ENCODE measurements at regions of chr10 and their contacts with region 1.

Region 1: GRCh38 chr10:17599089-17599488 is 18.1 kb downstream of the HACD1 start:
- DNase-seq: peak; percentile 55
- ATAC-seq: peak; percentile 27; the same call in 1 of the 2 replicates
- H3K4me3 ChIP-seq: no peak overlapping the region
- H3K27ac ChIP-seq: no peak overlapping the region
- H3K4me1 ChIP-seq: no peaks in the 10 kb centered on the region
- H3K27me3 ChIP-seq: no peaks in the 10 kb centered on the region
- CTCF ChIP-seq: peak; percentile 46
- POLR2A ChIP-seq: no peak
- RAD21 ChIP-seq: peak; percentile 58

Region 2: GRCh38 chr10:17430647-17431355 is 168.3 kb before region 1 on chr10:
- CTCF ChIA-PET with region 1: no interaction called
- POLR2A ChIA-PET with region 1: no interaction called
- dilution Hi-C with region 1: no loop called
- in situ Hi-C with region 1: no loop called
- intact Hi-C with region 1: loop called (anchors 5 kb)
- DNase-seq: peak; percentile 73
- ATAC-seq: peak; percentile 97
- H3K4me3 ChIP-seq: no peak overlapping the region
- H3K27ac ChIP-seq: no peak overlapping the region
- H3K4me1 ChIP-seq: peaks cover 2% of the 10 kb centered on the region; the same call in 1 of the 2 replicates
- H3K27me3 ChIP-seq: peaks cover 26% of the 10 kb centered on the region
- CTCF ChIP-seq: peak; percentile 83
- POLR2A ChIP-seq: no peak
- RAD21 ChIP-seq: peak; percentile 80

Region 3: DNA sequence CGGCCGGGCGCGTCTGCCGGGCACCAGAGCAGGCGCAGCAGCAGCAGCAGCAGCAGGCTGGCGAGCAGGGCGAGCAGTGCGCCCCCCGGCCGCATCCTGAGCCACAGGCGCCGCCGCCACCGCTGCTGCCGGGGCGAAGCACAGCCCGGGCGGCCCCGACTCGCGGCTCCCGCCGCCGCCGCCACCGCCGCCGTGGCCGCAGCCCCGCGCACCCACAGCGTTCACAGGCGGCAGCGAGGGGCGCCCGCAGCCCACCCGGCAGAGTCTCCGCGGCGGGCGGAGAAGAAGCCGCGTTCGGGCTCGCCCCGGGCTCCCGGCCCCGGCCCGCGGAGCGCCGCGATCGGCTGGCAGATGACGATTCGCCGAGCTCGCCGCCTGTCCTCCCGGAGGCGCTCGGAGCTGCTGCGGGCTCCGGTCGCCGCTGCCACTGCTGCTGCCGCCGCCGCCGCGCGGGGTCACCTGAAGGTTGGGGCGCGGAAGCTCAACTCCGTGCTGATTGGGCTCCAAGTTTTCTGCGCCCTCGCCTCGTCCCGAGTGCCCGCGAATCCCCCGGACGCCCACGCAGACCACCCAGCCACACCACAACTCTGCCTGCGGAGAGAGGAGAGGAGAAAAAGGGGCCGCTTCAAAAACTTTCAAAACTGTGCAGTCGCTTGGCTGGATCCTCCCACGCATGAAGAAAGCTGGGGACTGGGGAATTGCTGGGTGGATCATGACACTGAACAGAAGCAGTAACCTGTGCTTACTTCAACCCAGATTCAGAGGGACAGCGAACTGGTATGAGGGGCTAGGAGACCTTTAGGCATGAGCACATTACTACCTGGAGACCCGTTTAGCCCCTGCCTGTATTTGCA is 144.7 kb before region 1 on chr10 and contains the start of gene ST8SIA6:
- CTCF ChIA-PET with region 1: interaction called, 3 read pairs
- POLR2A ChIA-PET with region 1: no interaction called
- dilution Hi-C with region 1: no loop called
- in situ Hi-C with region 1: no loop called
- intact Hi-C with region 1: loop called (anchors 5 kb)
- DNase-seq: peak; percentile 47
- ATAC-seq: peak; percentile 93
- H3K4me3 ChIP-seq: peak within 1 kb of the TSS; percentile 52
- H3K27ac ChIP-seq: no peak within 1 kb of the TSS
- H3K4me1 ChIP-seq: peaks cover 2% of the 10 kb centered on the region; the same call in 1 of the 2 replicates
- H3K27me3 ChIP-seq: peaks cover 10% of the 10 kb centered on the region; the same call in 1 of the 2 replicates
- CTCF ChIP-seq: no peak
- POLR2A ChIP-seq: no peak
- RAD21 ChIP-seq: no peak; the same call in 1 of the 2 replicates
- total RNA-seq, gene ST8SIA6: 0.18 and 0.56 TPM in 2 replicates

Region 4: DNA sequence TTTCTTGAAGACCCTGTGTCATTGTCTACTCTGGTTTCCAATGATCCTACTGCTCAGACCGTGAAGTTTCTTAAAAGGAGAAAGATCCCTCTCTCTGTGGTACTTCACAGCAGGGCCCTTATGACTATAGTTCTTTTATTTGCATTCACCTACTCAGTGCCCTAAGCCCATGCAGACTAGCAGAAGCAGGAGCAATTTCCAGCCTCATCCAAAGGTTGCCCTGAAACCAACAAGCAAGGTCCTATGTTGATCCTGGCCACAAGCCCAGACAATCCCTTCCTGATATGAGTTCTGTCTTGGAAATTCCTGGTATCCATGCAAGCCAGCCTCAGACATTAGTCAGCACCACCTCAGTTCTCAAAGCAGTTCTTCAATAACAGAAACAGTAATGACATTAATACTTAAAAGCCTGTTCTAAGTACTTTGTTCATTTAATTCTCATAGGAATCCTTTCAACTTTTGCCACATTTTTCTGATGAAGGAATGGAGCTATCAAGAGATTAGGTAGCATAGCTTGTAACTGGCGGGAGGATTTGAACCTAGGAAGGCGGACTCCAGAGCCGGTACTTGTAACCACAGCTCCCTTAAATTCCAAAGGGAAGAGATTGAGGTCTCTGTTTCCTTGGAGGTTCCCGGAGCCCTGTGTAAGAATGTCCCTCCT is 86.6 kb before region 1 on chr10:
- CTCF ChIA-PET with region 1: no interaction called
- POLR2A ChIA-PET with region 1: no interaction called
- dilution Hi-C with region 1: no loop called
- in situ Hi-C with region 1: no loop called
- intact Hi-C with region 1: loop called (anchors 5 kb)
- DNase-seq: peak; percentile 98
- ATAC-seq: peak; percentile 93
- H3K4me3 ChIP-seq: peak overlapping the region; percentile 17; the same call in 1 of the 2 replicates
- H3K27ac ChIP-seq: peak overlapping the region; percentile 90
- H3K4me1 ChIP-seq: peaks cover 13% of the 10 kb centered on the region
- H3K27me3 ChIP-seq: no peaks in the 10 kb centered on the region
- CTCF ChIP-seq: no peak
- POLR2A ChIP-seq: no peak
- RAD21 ChIP-seq: 0 out of 2 replicates have a peak, but pooled peaks have one; percentile 16